Activated CD8-positive, alpha-beta T cell treated with anti-CD3 and anti-CD28 coated beads for 36 hours (primary cell): ENCODE measurements at regions of chr17 and their contacts with region 1.

Region 1: DNA sequence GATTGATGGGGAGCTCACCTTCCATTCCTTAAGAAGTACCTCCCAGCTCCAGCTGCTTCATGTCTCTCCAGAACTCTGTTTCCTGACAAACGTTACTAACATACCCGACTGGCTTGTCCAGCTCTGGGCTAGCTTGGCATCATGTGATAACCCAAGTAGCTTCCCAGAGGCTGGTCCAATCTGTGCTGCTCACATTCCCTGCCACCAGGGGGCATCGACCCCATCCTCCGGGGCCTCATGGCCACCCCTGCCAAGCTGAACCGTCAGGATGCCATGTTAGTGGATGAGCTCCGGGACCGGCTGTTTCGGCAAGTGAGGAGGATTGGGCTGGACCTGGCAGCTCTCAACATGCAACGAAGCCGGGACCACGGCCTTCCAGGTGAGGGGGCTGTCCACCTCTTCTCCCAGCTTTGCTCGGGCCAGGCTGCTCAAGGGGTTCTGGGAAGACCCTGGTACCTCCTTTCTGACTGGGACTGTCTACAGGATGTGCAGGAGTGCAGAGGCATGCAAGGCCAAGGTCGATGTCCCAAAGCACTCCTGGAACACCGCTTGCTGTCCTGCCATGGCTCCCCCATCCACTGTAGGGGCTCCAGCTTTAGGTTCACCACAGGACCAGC is 7.6 kb downstream of the EPX start:
- DNase-seq: peak; percentile 74
- ATAC-seq: peak; percentile 93
- H3K4me3 Mint-ChIP-seq: no peak overlapping the region
- H3K27ac Mint-ChIP-seq: no peak overlapping the region
- H3K4me1 Mint-ChIP-seq: no peaks in the 10 kb centered on the region
- H3K27me3 Mint-ChIP-seq: no peaks in the 10 kb centered on the region
- CTCF ChIP-seq: peak; percentile 58

Region 2: DNA sequence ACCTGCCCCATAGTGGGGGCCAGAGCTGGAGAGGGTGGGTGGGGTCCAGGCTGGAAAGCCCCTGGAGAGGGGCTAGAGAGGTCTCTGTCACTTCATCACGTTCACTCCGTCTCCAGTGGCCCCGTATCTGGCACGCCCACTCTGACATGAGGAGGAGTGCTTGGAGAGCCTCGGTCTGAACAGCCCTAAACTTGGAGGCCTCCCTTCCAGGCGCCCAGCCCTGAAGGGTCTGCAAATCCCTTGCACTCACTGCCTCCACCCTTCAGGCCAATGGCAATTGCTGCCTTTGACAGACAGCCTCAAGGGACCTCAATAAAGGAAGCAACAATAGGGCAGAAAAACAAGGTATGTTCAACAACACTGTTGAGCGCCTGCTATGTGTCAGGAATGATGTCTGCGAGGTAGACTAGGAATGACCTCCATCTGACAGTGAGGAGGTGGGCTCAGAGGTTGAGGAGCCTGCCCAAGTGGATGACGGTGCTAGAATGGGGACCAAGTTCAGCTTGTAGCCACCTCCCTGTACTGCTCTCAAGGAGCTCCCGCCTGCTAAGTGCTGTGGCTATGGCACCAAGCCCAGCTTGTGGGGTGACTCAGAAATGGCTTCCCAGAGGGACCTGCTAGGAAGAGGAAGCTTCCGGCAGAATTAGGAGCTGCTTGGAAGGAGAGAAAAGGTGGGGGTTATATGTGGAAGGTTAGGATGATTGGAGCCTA is 10.5 kb before region 1 on chr17:
- CTCF ChIA-PET with region 1: interaction called, 16 read pairs
- POLR2A ChIA-PET with region 1: no interaction called
- intact Hi-C with region 1: no loop called
- DNase-seq: no peak
- ATAC-seq: no peak
- H3K4me3 Mint-ChIP-seq: no peak overlapping the region
- H3K27ac Mint-ChIP-seq: no peak overlapping the region
- H3K4me1 Mint-ChIP-seq: no peaks in the 10 kb centered on the region
- H3K27me3 Mint-ChIP-seq: peaks cover 6% of the 10 kb centered on the region
- CTCF ChIP-seq: no peak

Region 3: DNA sequence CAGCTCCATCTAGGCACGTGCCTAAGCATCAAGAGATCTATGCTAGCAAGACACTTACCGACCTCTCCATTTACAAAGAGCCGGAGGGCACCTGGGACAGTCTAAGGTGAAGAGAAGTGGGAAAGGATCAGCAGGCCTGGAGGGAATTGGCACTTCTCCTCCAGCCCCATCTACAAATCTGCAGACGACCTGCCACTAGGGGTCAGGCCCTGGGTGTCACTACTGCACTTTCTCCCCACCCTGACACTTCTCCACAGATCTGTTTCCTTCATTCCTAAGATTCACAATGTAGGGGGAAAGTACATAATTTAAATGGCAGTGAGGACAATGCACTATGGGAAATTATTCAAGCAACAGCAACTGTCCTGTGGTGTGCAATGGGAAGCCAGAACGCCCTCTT is 10.8 kb after region 1 on chr17:
- CTCF ChIA-PET with region 1: interaction called, 28 read pairs
- POLR2A ChIA-PET with region 1: interaction called, 3 read pairs
- intact Hi-C with region 1: no loop called
- DNase-seq: no peak
- ATAC-seq: no peak
- H3K4me3 Mint-ChIP-seq: no peak overlapping the region
- H3K27ac Mint-ChIP-seq: no peak overlapping the region
- H3K4me1 Mint-ChIP-seq: no peaks in the 10 kb centered on the region
- H3K27me3 Mint-ChIP-seq: no peaks in the 10 kb centered on the region
- CTCF ChIP-seq: no peak

Region 4: DNA sequence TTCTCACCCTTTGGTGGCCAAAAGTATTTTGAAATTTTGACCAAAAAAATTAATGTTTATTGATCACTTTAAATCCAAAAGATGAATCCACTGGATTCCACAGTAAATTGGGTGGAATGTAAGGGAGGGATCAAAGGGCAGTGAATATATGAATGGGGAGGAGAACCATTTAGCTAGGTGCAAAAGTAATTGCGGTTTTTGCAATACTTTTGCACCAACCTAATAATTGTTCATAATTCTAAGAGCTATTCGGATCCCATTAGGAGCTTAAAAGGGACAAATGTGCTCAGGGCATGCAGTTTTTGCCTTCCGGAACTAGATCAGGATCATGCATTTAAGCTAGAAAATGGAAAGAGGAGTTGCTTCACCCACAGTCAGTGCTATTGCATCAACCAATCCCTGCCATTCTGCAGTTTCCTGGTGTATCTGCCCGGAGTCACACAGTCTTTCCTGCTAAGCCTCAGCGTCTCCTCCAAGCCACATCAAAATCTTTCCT is 38.1 kb after region 1 on chr17 and contains the start of gene LPO:
- CTCF ChIA-PET with region 1: interaction called, 16 read pairs
- POLR2A ChIA-PET with region 1: no interaction called
- intact Hi-C with region 1: no loop called
- DNase-seq: no peak
- ATAC-seq: no peak
- H3K4me3 Mint-ChIP-seq: no peak within 1 kb of the TSS
- H3K27ac Mint-ChIP-seq: no peak within 1 kb of the TSS
- H3K4me1 Mint-ChIP-seq: peaks cover 3% of the 10 kb centered on the region
- H3K27me3 Mint-ChIP-seq: peaks cover 40% of the 10 kb centered on the region
- CTCF ChIP-seq: no peak
- total RNA-seq, gene LPO: not detected

Region 5: DNA sequence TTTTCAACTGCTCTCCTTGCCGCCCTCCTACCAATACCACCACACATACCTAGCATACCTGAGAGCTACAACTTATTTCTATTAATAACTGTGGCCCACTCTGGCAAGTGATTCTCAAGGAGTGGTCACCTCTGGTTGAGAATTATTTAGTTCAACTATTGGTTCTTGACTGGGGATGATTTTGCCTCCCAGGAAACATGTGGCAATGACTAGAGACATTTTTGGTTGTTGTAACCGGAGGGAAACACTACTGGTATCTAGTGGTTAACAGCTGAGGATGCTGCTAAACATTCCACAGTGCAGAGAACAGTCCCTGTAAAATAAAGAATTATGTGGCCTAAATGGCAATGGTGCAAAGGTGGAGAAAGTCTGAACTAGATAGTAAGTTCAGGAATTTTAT is 809.9 kb after region 1 on chr17:
- CTCF ChIA-PET with region 1: no interaction called
- POLR2A ChIA-PET with region 1: no interaction called
- intact Hi-C with region 1: no loop called
- DNase-seq: no peak
- ATAC-seq: no peak
- H3K4me3 Mint-ChIP-seq: no peak overlapping the region
- H3K27ac Mint-ChIP-seq: no peak overlapping the region
- H3K4me1 Mint-ChIP-seq: peaks cover 5% of the 10 kb centered on the region
- H3K27me3 Mint-ChIP-seq: no peaks in the 10 kb centered on the region
- CTCF ChIP-seq: no peak